ENCODE measurements at regions of chr22 and their contacts with region 1.

Region 1: DNA sequence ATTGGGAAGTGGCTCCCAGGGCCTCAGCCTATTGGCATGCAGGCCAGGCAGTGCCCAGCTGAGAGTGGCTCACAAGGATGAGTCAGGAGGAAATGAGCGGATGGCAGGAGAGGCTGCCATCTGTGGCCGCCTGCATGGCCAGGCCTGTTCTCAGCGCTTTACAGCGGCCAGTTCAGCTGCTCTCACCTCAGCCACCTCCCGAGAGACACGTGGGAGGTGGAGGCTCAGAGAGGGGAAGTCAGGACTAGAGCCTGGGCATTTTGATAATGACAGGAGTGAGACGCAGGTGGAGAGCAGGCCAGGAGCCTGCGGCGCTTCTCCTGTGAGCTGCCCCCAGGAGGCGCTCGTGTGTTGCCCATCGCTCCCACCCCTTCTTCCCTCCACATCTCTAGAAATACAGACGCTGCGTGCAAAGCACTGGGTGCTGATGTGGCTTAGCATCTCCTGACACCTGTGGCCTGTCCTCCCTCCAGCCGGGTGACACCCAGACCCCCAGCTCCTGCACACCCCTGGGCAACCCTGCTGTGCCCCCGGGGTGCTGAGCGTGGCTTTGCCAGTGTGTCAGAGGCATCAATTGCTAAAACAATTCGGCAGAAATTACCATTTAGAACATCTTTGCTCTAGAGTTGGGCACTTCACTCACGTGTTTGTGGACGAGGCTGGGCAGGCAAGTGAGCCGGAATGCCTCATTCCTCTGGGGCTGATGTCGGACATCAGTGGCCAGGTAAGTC is 21.4 kb upstream of the PANX2 start:
- DNase-seq: peak; percentile 84
- H3K4me3 ChIP-seq: no peak overlapping the region
- H3K27ac ChIP-seq: no peak overlapping the region
- H3K4me1 ChIP-seq: no peaks in the 10 kb centered on the region
- CTCF ChIP-seq: peak; percentile 90

Region 2: GRCh38 chr22:50200461-50201190 is 51.5 kb after region 1 on chr22 and contains the start of gene SELENOO:
- CTCF ChIA-PET with region 1: no interaction called
- POLR2A ChIA-PET with region 1: no interaction called
- intact Hi-C with region 1: loop called (anchors 2 kb)
- DNase-seq: peak; percentile 90
- H3K4me3 ChIP-seq: peak within 1 kb of the TSS; percentile 98
- H3K27ac ChIP-seq: peak within 1 kb of the TSS; percentile 39
- H3K4me1 ChIP-seq: peaks cover 17% of the 10 kb centered on the region
- CTCF ChIP-seq: no peak
- total RNA-seq, gene SELENOO: 43.7 and 44.2 TPM in 2 replicates

Region 3: GRCh38 chr22:50209893-50210292 is 60.7 kb after region 1 on chr22:
- CTCF ChIA-PET with region 1: no interaction called
- POLR2A ChIA-PET with region 1: no interaction called
- intact Hi-C with region 1: loop called (anchors 1 kb)
- DNase-seq: peak; percentile 78
- H3K4me3 ChIP-seq: no peak overlapping the region
- H3K27ac ChIP-seq: no peak overlapping the region
- H3K4me1 ChIP-seq: peaks cover 14% of the 10 kb centered on the region
- CTCF ChIP-seq: peak; percentile 91

Region 4: DNA sequence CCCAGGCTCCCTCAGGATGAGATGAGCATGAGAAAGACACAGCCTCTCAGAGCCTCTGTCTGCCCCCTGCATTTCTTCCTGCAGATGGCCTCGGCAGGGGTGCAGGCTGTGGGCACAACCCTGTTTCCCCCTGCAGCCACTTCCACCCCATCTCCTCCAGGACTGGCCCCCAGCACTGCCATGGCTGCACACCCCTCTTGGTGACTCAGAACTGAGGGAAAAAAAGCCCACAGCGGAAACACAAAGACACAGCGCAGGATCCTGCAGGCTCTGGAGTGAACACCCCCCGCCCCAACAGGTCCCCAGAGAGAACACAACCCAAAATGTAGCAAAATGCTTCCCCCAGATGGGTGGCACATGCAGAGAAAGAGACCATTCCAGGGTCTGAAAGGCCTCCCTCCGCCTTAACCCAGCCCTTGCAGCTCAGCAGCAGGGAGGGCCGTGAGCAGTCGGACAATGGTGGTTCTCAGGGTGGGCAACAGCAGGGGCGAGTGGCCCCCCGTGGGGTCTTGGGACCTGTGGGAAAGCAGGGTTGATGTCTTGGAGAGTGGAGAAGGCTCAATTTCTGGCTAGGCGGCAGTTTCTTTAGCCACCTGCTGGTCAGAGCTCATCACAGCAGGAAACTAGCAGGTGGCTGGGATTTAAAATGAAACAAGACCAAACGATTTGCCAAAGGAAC is 87.7 kb after region 1 on chr22:
- CTCF ChIA-PET with region 1: no interaction called
- POLR2A ChIA-PET with region 1: no interaction called
- intact Hi-C with region 1: loop called (anchors 1 kb)
- DNase-seq: peak; percentile 51
- H3K4me3 ChIP-seq: no peak overlapping the region
- H3K27ac ChIP-seq: no peak overlapping the region
- H3K4me1 ChIP-seq: peaks cover 8% of the 10 kb centered on the region
- CTCF ChIP-seq: peak; percentile 76

Region 5: GRCh38 chr22:50417001-50417400 is 267.8 kb after region 1 on chr22:
- CTCF ChIA-PET with region 1: no interaction called
- POLR2A ChIA-PET with region 1: no interaction called
- intact Hi-C with region 1: no loop called
- DNase-seq: no peak
- H3K4me3 ChIP-seq: no peak overlapping the region
- H3K27ac ChIP-seq: no peak overlapping the region
- H3K4me1 ChIP-seq: no peaks in the 10 kb centered on the region
- CTCF ChIP-seq: no peak